ENCODE measurements at regions of chr16 and their contacts with region 1.

Region 1: GRCh38 chr16:25111403-25112166 is at the start of gene LCMT1:
- DNase-seq: peak; percentile 78 to 98 (median 85)
- ATAC-seq: peak; percentile 91
- H3K4me3 ChIP-seq: peak within 1 kb of the TSS; percentile 71
- H3K4me3 Mint-ChIP-seq: peak within 1 kb of the TSS; percentile 97
- H3K27ac ChIP-seq: peak within 1 kb of the TSS; percentile 28 to 32
- H3K27ac Mint-ChIP-seq: peak within 1 kb of the TSS; percentile 72
- H3K4me1 ChIP-seq: peaks cover 33% of the 10 kb centered on the region
- H3K4me1 Mint-ChIP-seq: peaks cover 71% of the 10 kb centered on the region
- H3K27me3 ChIP-seq: no peaks in the 10 kb centered on the region
- H3K27me3 Mint-ChIP-seq: no peaks in the 10 kb centered on the region
- CTCF ChIP-seq: no peak
- total RNA-seq, gene LCMT1: 22.5 to 28.2 TPM

Region 2: DNA sequence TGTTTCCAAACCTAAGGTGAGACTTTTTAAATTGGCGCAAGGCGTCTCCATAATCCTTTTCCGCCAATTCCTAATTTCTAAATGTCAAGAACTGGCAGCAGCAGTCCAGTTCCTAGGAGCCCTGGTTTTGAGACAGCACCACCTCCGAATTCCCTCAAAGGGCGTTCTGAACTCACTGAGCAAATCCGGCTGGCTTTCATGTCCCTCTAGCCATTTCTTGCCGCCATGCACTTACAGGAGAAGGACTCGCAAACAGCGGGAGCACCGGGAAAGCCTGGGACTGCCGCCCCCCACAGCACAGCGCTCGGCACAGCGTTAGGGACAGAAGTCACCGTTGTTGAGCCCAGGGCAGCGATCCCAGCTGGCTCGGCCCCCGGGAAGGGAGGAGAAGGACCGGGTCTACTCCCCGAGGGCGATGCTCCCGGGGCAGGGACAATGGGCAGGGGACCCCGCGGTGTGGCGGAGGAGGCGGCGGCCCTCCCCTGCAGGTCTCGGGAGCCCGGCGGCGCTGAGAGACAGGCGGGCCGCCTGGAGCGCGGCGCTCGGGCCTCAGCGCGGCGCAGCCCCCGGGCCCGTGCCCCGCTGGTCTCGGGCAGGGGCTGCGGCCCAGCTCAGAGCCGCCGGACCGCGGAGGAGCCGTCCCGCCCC is 97.0 kb before region 1 on chr16:
- CTCF ChIA-PET with region 1: interaction called, 3 read pairs
- POLR2A ChIA-PET with region 1: interaction called, 21 read pairs
- intact Hi-C with region 1: loop called (anchors 2 to 5 kb)
- DNase-seq: peak in 10 of 14 experiments; percentile 1 to 49 (median 13)
- ATAC-seq: peak; percentile 34
- H3K4me3 ChIP-seq: peak overlapping the region; percentile 89
- H3K4me3 Mint-ChIP-seq: peak overlapping the region; percentile 96
- H3K27ac ChIP-seq: peak overlapping the region; percentile 76 to 78
- H3K27ac Mint-ChIP-seq: peak overlapping the region; percentile 91
- H3K4me1 ChIP-seq: peaks cover 58% of the 10 kb centered on the region
- H3K4me1 Mint-ChIP-seq: peaks cover 79% of the 10 kb centered on the region
- H3K27me3 ChIP-seq: no peaks in the 10 kb centered on the region
- H3K27me3 Mint-ChIP-seq: no peaks in the 10 kb centered on the region
- CTCF ChIP-seq: no peak

Region 3: DNA sequence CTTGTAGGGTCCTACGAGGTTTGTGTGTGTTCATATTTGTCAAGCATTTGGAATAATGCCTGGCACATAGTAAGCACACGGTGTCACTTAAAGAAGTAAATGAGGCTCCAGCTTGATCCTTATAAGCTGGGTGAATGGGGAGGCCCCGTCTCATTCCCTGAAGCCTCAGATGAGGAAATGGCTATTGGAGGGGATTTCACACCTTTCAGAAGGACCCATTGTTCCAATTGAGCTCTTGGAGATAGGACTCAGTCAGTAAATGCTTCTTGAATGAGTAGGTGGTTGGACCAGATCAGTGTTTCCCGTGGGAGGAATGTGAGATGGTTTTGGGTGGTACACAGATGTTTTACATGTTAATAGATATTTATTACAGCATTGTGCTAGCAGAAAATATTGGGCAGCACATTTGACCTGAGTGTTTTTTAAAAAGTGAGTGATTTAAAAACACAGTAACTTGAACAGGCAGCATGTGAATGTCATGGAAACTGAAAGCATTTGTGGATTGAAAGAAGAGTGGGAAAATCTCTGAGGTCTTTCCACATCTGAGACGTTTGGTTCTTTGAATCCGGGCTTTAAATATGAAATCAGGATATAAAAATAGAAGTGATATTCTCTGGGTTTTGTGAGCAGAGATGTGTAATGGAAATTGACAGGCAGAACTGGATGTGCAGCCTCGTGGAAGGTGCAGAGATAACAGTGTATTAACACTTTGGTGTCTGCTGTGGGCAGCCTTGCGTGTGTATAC is 60.0 kb before region 1 on chr16:
- CTCF ChIA-PET with region 1: interaction called, 7 read pairs
- POLR2A ChIA-PET with region 1: interaction called, 48 read pairs
- intact Hi-C with region 1: loop called (anchors 1 to 2 kb)
- DNase-seq: peak in 1 of 14 experiments; percentile 27
- ATAC-seq: no peak
- H3K4me3 ChIP-seq: peak overlapping the region; percentile 30
- H3K4me3 Mint-ChIP-seq: peak overlapping the region; percentile 74
- H3K27ac ChIP-seq: peak overlapping the region; percentile 0 to 80
- H3K27ac Mint-ChIP-seq: peak overlapping the region; percentile 100
- H3K4me1 ChIP-seq: peaks cover 43% of the 10 kb centered on the region
- H3K4me1 Mint-ChIP-seq: peaks cover 53% of the 10 kb centered on the region
- H3K27me3 ChIP-seq: no peaks in the 10 kb centered on the region
- H3K27me3 Mint-ChIP-seq: no peaks in the 10 kb centered on the region
- CTCF ChIP-seq: no peak

Region 4: DNA sequence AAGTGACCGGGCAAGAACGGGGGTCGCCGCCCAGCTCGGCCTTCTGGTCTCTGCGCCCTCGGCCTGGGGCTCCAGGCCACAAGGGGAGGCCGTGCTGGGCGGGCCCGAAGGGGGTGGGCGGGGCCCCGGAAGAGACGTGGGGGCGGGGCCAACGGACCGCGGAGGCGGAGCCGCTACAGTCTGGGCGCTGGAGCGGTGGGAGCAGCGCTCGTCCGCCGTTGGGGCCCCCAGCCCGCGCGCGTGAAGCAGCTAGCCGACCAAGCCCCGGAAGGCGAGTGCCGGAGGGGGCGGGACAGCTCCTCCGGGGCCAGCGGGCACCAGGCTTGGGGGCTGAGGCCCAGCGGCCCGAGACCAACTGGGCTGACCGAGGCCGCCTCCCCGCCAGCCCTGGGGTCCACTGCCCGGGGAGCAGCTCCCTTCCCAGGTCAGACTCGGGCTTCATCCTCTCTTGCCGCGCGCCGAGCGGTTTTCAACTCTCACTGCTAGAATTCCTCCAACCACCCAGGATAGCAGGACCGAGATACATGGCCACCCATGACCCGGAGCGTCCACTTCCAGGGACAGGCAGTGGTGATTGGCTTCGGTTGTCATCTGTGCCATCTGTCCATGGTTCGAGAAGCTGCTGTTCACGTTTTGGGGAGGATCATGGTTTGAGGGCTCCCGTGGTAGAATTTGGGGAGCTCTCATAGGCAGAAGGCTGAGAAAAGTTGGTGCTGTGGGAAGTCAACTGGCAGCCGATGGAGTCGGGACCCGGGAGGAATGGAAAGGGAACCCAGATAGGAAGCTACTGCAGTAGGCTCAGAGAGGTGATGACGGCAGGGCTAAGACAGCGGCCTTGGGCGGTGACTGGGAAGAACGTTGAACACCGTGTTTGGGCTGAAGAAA is 44.6 kb before region 1 on chr16:
- CTCF ChIA-PET with region 1: no interaction called
- POLR2A ChIA-PET with region 1: interaction called, 68 read pairs
- intact Hi-C with region 1: no loop called
- DNase-seq: peak; percentile 67 to 93 (median 76)
- ATAC-seq: peak; percentile 97
- H3K4me3 ChIP-seq: peak overlapping the region; percentile 91
- H3K4me3 Mint-ChIP-seq: peak overlapping the region; percentile 89
- H3K27ac ChIP-seq: peak overlapping the region; percentile 68 to 88
- H3K27ac Mint-ChIP-seq: peak overlapping the region; percentile 86
- H3K4me1 ChIP-seq: peaks cover 50% of the 10 kb centered on the region
- H3K4me1 Mint-ChIP-seq: peaks cover 43% of the 10 kb centered on the region
- H3K27me3 ChIP-seq: no peaks in the 10 kb centered on the region
- H3K27me3 Mint-ChIP-seq: no peaks in the 10 kb centered on the region
- CTCF ChIP-seq: no peak

Measured in CD4-positive, alpha-beta T cell (primary cell).